Activated T-helper 1 cell treated with anti-CD3 and anti-CD28 coated beads, Interleukin-12 subunit alpha, Interleukin-12 subunit beta, Interleukin-2, Interleukin-4 antibody, amounts not matched to agents 30 ng/mL and 10 ng/mL and 1 ng/mL, durations not matched to agents 14 hours and 24 hours and 36 hours (primary cell): ENCODE measurements at regions of chr5 and their contacts with region 1.

Region 1: DNA sequence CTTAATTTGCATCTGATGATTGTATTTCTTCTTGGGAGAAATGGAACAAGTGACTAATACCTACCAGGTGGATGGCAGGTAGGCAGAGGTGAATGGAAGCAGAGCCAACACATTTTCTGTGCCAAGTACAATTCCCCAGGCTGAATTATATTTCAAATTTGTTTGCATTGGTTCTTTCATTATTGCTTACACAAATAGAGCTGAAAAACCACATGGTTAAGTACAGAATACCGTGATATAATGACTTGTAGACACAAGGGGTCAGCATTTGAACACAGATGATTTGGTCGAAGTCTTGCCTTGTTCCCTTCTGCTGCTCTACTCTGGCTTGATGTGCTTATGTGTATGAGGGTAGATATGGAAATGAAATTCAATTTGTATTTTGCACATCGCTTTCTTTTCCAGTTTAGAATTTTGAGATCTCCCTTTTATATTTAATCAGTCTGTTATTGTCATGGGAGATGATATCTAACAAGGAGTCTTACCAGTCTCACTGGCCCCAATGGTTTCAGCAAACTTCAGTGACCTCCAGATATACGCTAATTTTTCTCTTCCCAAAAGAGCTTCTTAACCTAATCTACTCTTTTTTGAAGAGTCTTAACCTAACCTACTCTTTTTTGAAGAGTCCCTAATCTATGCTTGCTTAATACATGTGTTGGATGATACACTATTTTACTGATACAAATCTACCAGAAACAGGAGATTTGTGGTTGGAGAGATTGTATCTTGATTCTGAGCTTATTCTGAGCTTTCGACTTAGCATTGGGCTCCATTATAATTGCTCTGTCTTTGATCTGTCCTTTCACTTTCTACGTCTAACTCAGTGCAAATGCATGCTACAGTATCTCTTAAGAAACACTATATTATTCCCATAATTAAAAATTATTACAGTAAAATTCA is 88.1 kb downstream of the PCSK1 start:
- DNase-seq: no peak
- H3K4me3 Mint-ChIP-seq: no peak overlapping the region
- H3K27ac Mint-ChIP-seq: peak overlapping the region; percentile 1
- H3K4me1 Mint-ChIP-seq: peaks cover 22% of the 10 kb centered on the region
- H3K27me3 Mint-ChIP-seq: peaks cover 35% of the 10 kb centered on the region

Region 2: GRCh38 chr5:96595300-96596090 is 250.6 kb after region 1 on chr5:
- intact Hi-C with region 1: loop called (anchors 1 kb)
- DNase-seq: no peak
- H3K4me3 Mint-ChIP-seq: no peak overlapping the region
- H3K27ac Mint-ChIP-seq: no peak overlapping the region
- H3K4me1 Mint-ChIP-seq: peaks cover 29% of the 10 kb centered on the region
- H3K27me3 Mint-ChIP-seq: peaks cover 15% of the 10 kb centered on the region

Region 3: DNA sequence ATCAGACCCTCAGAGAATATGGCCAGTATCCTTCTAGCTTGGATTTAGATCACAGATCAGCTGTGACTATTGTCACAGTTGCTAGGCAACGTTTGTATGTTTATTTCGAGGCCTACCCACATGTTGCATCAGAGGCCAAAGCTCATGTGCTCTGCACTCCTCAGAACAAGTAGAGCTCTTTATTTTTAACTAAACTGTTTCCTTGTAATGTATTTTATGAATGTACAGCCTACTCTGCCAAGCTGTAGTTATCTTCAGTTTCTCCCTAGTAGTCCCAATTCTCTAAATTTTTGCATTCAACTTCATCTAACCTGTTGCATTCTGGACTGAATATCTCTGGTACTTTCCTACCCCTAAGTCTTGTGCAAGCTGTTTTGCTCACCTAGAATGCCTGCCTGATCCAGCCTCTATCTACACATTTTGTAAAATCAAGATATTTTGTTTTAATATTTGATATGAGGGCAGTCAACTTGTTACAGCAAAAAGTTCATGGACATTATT is 370.1 kb after region 1 on chr5:
- intact Hi-C with region 1: no loop called
- DNase-seq: no peak
- H3K4me3 Mint-ChIP-seq: no peak overlapping the region
- H3K27ac Mint-ChIP-seq: peak overlapping the region; percentile 41
- H3K4me1 Mint-ChIP-seq: peaks cover 15% of the 10 kb centered on the region
- H3K27me3 Mint-ChIP-seq: no peaks in the 10 kb centered on the region

Region 4: DNA sequence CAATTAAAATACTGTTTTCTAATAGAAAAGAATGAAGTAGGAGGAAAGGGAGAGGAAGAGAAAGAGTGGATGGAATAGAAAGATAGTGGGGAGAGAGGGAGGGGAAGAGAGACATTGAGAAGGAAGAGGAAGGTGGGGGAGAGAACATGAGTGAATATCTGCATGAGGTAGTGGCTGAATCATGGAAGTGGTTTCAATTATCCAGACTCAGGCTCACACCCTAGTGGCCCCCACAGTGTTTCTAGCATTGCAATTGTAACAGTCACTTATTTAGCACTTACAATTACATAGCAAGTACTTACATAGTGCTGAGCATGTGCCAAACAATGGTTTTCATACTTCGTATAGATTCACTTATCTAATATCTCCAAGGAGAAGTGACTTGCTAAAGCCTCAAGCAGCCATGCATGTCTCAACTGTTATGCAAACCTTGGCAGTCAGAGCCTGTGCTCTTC is 390.0 kb after region 1 on chr5:
- intact Hi-C with region 1: loop called (anchors 10 kb)
- DNase-seq: no peak
- H3K4me3 Mint-ChIP-seq: no peak overlapping the region
- H3K27ac Mint-ChIP-seq: no peak overlapping the region
- H3K4me1 Mint-ChIP-seq: peaks cover 13% of the 10 kb centered on the region
- H3K27me3 Mint-ChIP-seq: no peaks in the 10 kb centered on the region